CD14-positive monocyte (primary cell): ENCODE measurements at regions of chr6 and their contacts with region 1.

Region 1: DNA sequence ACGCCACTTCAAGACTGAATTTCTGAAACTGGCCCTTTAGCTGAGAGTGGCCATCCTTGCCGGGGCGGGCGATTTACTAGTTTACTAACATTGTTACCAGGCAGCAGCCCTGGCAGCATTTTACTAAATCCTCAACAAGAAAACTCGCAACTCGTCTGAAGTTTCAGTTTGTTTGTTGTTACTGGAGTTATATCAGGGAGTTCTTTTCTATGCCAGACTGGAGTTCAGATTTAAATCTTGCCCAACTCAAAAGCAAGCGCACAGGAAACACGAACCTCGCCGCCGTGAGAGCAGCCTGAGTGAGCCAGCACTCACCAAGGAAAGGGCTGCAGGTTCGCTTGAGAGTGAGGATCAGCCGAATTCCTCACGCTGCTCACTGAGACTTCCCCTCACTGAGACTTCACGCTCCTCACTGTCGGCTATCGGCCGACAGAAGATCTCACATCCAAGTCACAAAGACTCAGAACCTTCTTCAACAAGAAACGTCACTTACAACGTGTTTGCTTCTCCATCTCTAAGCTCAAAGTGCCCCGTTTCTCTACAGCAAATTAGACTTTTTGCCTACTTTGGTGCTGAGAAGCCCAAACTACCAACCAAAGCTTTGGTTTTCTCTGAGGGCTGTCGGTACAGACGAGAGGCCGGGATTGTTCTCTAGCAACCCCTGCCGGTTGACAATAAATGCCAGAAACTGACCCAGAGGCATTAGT is 78.9 kb downstream of the OLIG3 start:
- DNase-seq: peak; percentile 68 to 78 (median 74)
- H3K4me3 ChIP-seq: peak overlapping the region; percentile 53 to 80 (median 71)
- H3K4me3 Mint-ChIP-seq: peak overlapping the region; percentile 81 to 94
- H3K27ac ChIP-seq: peak overlapping the region; percentile 29 to 74
- H3K27ac Mint-ChIP-seq: peak overlapping the region; percentile 74 to 90 (median 86)
- H3K4me1 ChIP-seq: peaks cover 8 to 9% of the 10 kb centered on the region in 2 donors
- H3K4me1 Mint-ChIP-seq: peaks cover 17% of the 10 kb centered on the region
- H3K27me3 ChIP-seq: peaks cover under 1 to 4% of the 10 kb centered on the region in 2 donors
- H3K27me3 Mint-ChIP-seq: peaks cover 3 to 12% (median 10%) of the 10 kb centered on the region in 3 donors
- CTCF ChIP-seq: peak; percentile 76

Region 2: GRCh38 chr6:137094411-137095008 is 320.8 kb before region 1 on chr6:
- intact Hi-C with region 1: loop called in 1 of 2 experiments (anchors 5 kb)
- DNase-seq: peak; percentile 45 to 68 (median 62)
- H3K4me3 ChIP-seq: no peak overlapping the region
- H3K4me3 Mint-ChIP-seq: no peak overlapping the region
- H3K27ac ChIP-seq: no peak overlapping the region
- H3K27ac Mint-ChIP-seq: no peak overlapping the region
- H3K4me1 ChIP-seq: peaks cover 3 to 9% of the 10 kb centered on the region in 2 donors
- H3K4me1 Mint-ChIP-seq: peaks cover 14% of the 10 kb centered on the region
- H3K27me3 ChIP-seq: no peaks in the 10 kb centered on the region
- H3K27me3 Mint-ChIP-seq: peaks cover 0 to 5% (median 2%) of the 10 kb centered on the region in 3 donors
- CTCF ChIP-seq: peak; percentile 84

Region 3: GRCh38 chr6:137341681-137342195 is 73.5 kb before region 1 on chr6:
- intact Hi-C with region 1: loop called in 1 of 2 experiments (anchors 10 kb)
- DNase-seq: peak in 2 of 3 donors; percentile 34 to 40
- H3K4me3 ChIP-seq: peak overlapping the region in 1 of 3 experiments; percentile 77
- H3K4me3 Mint-ChIP-seq: peak overlapping the region in 1 of 2 donors; percentile 51
- H3K27ac ChIP-seq: no peak overlapping the region
- H3K27ac Mint-ChIP-seq: peak overlapping the region in 1 of 7 donors; percentile 38
- H3K4me1 ChIP-seq: peaks cover 5 to 16% of the 10 kb centered on the region in 2 donors
- H3K4me1 Mint-ChIP-seq: peaks cover 15% of the 10 kb centered on the region
- H3K27me3 ChIP-seq: peaks cover 0 to 7% of the 10 kb centered on the region in 2 donors
- H3K27me3 Mint-ChIP-seq: peaks cover 2 to 7% (median 7%) of the 10 kb centered on the region in 3 donors
- CTCF ChIP-seq: peak; percentile 26